ENCODE measurements at regions of chr2 and their contacts with region 1.

Region 1: GRCh38 chr2:102473020-102473419 is at the start of gene SLC9A4:
- DNase-seq: peak; percentile 57 to 73 (median 60)
- ATAC-seq: no peak
- H3K4me3 ChIP-seq: no peak within 1 kb of the TSS
- H3K27ac ChIP-seq: no peak within 1 kb of the TSS
- H3K4me1 ChIP-seq: no peaks in the 10 kb centered on the region
- H3K27me3 ChIP-seq: no peaks in the 10 kb centered on the region
- CTCF ChIP-seq: peak; percentile 72 to 80 (median 77)
- POLR2A ChIP-seq: no peak
- total RNA-seq, gene SLC9A4: 0.78 TPM in 1 of 2 donors, not detected in the other

Region 2: GRCh38 chr2:102258386-102259074 is 214.5 kb before region 1 on chr2:
- intact Hi-C with region 1: no loop called
- DNase-seq: no peak
- ATAC-seq: no peak
- H3K4me3 ChIP-seq: no peak overlapping the region
- H3K27ac ChIP-seq: no peak overlapping the region
- H3K4me1 ChIP-seq: no peaks in the 10 kb centered on the region
- H3K27me3 ChIP-seq: no peaks in the 10 kb centered on the region
- CTCF ChIP-seq: no peak
- POLR2A ChIP-seq: no peak

Region 3: GRCh38 chr2:102615622-102616436 is 142.8 kb after region 1 on chr2:
- intact Hi-C with region 1: loop called (anchors 10 kb)
- DNase-seq: peak; percentile 47 to 66 (median 59)
- ATAC-seq: peak; percentile 72
- H3K4me3 ChIP-seq: no peak overlapping the region
- H3K27ac ChIP-seq: no peak overlapping the region
- H3K4me1 ChIP-seq: peaks cover 18% of the 10 kb centered on the region
- H3K27me3 ChIP-seq: peaks cover 0 to 3% of the 10 kb centered on the region in 2 donors
- CTCF ChIP-seq: peak; percentile 40 to 75 (median 67)
- POLR2A ChIP-seq: no peak